ENCODE measurements at regions of chr1 and their contacts with region 1.

Region 1: DNA sequence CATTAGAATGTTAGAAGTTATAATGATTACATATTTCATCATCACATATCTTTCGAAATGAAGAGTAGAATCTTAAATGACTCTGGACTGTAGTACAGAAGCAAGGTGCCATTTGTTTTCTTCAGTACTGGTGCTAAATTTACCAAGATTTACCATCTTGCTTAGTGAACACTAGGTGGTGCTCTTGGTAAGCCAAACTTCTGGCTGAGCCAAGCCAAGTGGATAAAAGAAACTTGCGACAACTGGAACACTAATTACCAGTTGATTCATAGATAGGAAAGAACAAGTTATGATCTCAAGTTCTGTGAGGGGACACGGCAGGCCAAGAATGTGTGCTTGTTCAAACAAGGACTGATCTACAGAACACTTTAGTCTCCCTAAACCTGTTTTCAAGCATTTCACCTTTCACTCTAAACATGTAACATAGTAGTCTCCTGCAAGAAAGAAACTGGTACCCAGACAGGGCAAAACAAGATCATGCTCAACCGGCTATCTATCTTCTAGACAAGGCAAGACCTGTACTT is 19.8 kb downstream of the SPRTN start:
- DNase-seq: peak; percentile 88
- H3K4me3 Mint-ChIP-seq: no peak overlapping the region
- H3K27ac Mint-ChIP-seq: no peak overlapping the region
- H3K4me1 Mint-ChIP-seq: peaks cover 17% of the 10 kb centered on the region
- H3K27me3 Mint-ChIP-seq: no peaks in the 10 kb centered on the region
- CTCF ChIP-seq: peak; percentile 96

Region 2: DNA sequence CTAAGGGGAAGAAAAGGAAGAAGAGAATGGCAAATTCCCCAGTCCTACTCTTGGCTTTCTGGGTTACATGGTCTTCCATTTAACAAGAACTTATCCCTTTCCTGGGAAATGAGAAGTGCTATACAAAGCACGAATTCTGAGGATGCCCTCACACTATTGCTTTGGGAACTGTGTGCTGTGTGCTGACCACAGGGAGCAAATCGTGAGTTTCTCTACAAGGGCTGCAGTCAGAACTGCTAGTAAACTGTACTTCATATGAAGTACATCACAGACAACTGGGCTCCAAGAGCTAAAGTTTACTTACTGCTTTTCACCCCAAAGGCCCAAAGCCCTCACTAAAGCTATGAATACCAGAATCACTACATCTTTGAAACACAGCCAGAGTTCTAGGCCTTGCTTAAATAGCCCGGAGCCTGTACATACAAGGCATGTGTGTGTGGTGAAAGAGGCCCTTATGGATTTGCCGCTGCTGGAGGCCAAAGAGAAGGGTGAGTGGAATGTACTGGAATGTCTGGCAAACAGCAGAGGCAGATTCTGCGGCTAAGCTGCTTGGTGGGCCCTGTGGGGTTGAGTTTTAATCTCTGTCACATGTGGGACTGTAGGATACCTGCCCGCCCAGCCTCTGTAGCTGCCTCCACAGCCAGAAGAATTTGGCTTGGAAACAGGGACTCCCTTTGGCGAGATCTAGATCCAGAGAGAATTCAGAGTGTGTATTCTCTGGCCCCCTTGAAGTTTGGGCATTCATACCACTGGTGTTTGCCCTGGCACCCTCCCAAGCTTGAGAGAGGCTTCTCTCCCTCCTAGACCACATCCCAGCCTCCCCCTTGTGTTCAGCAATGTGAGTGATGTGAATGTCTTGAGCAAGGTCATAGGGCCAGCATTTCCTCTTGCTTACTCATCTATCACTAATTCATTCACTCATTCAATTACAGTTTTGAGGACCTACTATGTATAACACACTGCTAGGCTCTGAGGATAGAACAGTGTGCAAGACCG is 217.9 kb before region 1 on chr1:
- CTCF ChIA-PET with region 1: no interaction called
- POLR2A ChIA-PET with region 1: no interaction called
- intact Hi-C with region 1: no loop called
- DNase-seq: peak; percentile 87
- H3K4me3 Mint-ChIP-seq: no peak overlapping the region
- H3K27ac Mint-ChIP-seq: no peak overlapping the region
- H3K4me1 Mint-ChIP-seq: peaks cover 22% of the 10 kb centered on the region
- H3K27me3 Mint-ChIP-seq: peaks cover 21% of the 10 kb centered on the region
- CTCF ChIP-seq: no peak

Region 3: DNA sequence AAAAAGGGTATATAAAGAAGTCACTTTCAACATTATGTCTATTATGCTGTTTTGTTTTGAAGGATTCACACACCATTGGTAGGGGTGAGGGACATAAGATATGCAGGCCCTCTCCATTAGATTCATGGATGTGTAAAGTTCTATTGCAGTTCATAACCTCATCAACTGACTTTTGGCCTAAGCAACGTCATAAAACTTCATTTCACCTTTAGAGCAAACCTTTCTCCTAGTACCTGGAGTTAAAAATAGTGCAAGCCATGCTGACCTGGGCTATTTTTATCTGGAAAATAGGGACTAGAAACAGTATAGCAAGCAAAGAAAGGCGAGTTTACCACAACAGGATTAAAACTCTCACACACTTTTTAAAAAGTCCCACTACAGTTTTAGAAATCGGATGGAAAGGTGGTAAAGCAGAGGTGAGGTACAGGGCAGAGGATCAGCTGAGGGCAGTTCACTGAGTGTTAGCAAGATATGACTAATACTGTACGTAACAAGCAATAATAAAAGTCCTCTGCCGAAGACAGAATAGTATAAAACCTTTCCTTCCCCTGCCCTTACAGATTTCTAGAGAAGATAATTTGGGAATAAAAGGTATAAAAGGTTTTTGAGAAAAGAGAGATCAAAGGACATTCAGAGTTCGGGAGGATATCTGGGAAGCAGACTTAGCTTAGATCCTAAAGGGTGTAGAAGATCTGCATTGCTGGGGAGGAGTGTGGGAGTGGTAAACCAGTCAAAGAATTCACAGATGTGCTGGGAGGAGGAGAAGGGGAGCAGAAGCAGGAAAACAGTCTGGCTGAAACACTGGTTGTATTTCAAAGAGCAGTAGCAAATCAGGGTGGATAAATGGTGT is 49.9 kb after region 1 on chr1:
- CTCF ChIA-PET with region 1: interaction called, 4 read pairs
- POLR2A ChIA-PET with region 1: interaction called, 18 read pairs
- intact Hi-C with region 1: no loop called
- DNase-seq: peak; percentile 68
- H3K4me3 Mint-ChIP-seq: no peak overlapping the region
- H3K27ac Mint-ChIP-seq: no peak overlapping the region
- H3K4me1 Mint-ChIP-seq: peaks cover 15% of the 10 kb centered on the region
- H3K27me3 Mint-ChIP-seq: no peaks in the 10 kb centered on the region
- CTCF ChIP-seq: no peak

Region 4: DNA sequence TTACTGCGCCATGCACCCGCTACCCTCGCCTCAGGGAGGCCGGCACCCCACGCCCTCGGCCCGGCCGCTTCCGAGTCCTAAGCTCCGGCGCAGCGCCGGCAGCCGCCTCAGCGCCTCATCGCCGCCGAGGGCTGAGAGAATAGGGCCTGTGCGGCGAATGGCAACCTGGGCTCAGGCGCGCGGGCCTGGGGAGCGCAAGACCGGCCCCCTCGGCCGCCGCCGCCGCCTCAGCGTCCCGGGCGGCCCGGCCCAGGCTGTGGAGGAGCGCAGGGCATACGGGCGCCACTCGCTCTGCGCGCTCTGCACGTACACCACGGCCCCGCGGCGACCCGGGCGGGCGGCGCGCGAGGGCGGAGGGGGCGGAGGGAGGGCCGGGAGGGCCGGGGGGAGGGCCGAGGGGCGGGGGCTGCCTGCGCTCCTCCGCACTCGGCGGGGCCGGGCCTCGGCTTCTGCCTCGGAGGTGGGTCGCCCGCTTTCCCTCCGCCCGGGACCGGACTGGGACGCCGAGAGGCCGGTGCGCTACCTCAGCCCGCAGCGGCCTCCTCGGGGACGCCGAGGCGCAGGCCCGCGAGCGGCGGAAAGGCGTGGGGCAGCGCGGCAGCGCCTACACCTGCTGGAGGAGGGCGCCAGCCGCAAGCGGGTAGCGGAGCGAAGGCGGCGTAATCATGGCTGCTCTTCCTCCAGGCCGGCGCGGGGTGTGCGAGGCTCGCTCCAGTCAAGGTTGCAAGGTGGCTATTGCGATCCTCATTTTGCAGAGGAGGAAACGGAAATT is 64.3 kb after region 1 on chr1 and contains the start of gene EGLN1:
- CTCF ChIA-PET with region 1: interaction called, 27 read pairs
- POLR2A ChIA-PET with region 1: interaction called, 169 read pairs
- intact Hi-C with region 1: loop called (anchors 1 kb)
- DNase-seq: peak; percentile 95
- H3K4me3 Mint-ChIP-seq: peak within 1 kb of the TSS; percentile 82
- H3K27ac Mint-ChIP-seq: peak within 1 kb of the TSS; percentile 87
- H3K4me1 Mint-ChIP-seq: peaks cover 34% of the 10 kb centered on the region
- H3K27me3 Mint-ChIP-seq: no peaks in the 10 kb centered on the region
- CTCF ChIP-seq: peak; percentile 43
- total RNA-seq, gene EGLN1: 67.3 and 68.8 TPM in 2 replicates

Region 5: GRCh38 chr1:231478800-231479199 is 120.9 kb after region 1 on chr1:
- CTCF ChIA-PET with region 1: no interaction called
- POLR2A ChIA-PET with region 1: no interaction called
- intact Hi-C with region 1: no loop called
- DNase-seq: no peak
- H3K4me3 Mint-ChIP-seq: no peak overlapping the region
- H3K27ac Mint-ChIP-seq: no peak overlapping the region
- H3K4me1 Mint-ChIP-seq: no peaks in the 10 kb centered on the region
- H3K27me3 Mint-ChIP-seq: no peaks in the 10 kb centered on the region
- CTCF ChIP-seq: no peak

Region 6: GRCh38 chr1:231550448-231550781 is 192.5 kb after region 1 on chr1:
- CTCF ChIA-PET with region 1: interaction called, 6 read pairs
- POLR2A ChIA-PET with region 1: interaction called, 6 read pairs
- intact Hi-C with region 1: loop called (anchors 1 kb)
- DNase-seq: peak; percentile 60
- H3K4me3 Mint-ChIP-seq: no peak overlapping the region
- H3K27ac Mint-ChIP-seq: no peak overlapping the region
- H3K4me1 Mint-ChIP-seq: peaks cover 16% of the 10 kb centered on the region
- H3K27me3 Mint-ChIP-seq: no peaks in the 10 kb centered on the region
- CTCF ChIP-seq: peak; percentile 46

Region 7: DNA sequence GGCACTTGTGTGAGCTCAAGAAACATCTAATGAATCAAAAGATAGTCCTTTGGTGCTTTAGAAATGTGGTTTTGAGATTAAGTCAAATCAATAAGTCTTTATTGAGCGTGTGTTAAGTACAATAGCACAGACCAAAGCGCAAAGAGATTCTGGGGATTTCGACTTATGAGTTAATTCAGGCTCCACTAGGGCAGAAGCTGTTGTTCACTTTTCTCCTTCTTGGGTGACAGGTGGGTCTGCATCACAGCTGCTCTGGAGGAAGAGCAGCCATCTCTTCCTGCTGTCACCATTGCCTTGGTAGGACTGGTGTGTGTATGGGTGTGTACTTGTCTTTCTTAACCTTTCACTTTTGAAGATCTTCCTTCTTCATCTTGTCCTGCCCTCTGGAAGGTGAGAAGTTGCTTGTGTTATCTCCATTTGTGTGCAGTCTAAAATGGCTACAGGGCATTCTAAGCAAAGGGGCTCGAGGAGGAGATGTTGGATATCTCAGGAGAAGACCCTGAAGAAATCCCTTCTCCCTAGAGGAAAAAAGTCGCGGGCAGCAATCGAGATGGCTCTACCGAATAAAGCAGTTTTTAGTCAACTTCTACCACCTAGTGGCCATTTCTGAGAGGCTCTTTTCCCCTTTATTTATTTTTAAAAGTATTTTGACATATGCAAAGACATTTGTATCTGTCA is 245.8 kb after region 1 on chr1:
- CTCF ChIA-PET with region 1: interaction called, 8 read pairs
- POLR2A ChIA-PET with region 1: interaction called, 22 read pairs
- intact Hi-C with region 1: loop called (anchors 1 kb)
- DNase-seq: peak; percentile 84
- H3K4me3 Mint-ChIP-seq: peak overlapping the region; percentile 84
- H3K27ac Mint-ChIP-seq: peak overlapping the region; percentile 66
- H3K4me1 Mint-ChIP-seq: peaks cover 12% of the 10 kb centered on the region
- H3K27me3 Mint-ChIP-seq: peaks cover 26% of the 10 kb centered on the region
- CTCF ChIP-seq: peak; percentile 91

Measured in MCF 10A (cell line).